HEK293 (cell line): ENCODE measurements at regions of chr9 and their contacts with region 1.

Region 1: DNA sequence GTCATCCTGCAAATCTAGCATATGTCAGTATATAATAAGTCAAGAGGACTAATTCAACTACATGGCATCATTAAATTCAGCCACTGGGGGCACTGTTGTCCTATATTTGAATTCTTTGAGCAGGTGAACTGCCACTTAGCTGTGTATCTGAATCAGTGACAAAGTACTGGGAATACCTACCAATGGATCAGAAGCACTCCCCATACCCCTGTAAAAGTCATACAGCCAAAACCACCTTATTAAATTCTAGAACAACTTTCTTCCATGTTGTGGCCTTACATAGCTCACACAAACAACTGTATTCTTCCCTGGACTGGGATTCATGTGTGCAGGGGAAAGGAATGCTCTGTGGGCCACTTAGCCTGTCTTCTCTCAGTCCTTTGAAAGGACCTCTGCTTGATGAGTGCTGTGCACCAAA is 57.4 kb upstream of the PLPP6 start:
- H3K4me3 ChIP-seq: no peak overlapping the region
- H3K27ac ChIP-seq: no peak overlapping the region
- H3K4me1 ChIP-seq: no peaks in the 10 kb centered on the region
- CTCF ChIP-seq: no peak

Region 2: DNA sequence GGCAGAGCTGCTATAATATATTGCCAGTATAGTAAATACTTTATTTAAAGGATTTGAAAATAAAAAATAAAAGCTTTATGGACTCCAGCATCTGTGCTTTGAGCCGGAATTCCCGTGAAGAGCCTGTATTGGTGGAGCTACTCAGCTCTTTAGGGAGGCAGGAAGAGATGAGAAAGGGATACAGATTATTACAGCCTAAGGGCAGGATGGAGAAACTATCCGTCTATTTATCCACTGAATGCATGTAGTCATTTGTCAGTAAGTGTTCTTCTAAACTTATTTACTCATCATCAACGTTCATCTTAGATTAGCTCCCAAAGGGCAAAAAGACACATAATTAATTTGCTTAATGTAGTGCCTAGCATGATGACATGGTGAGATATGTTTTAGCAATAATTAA is 66.1 kb before region 1 on chr9:
- CTCF ChIA-PET with region 1: no interaction called
- POLR2A ChIA-PET with region 1: no interaction called
- H3K4me3 ChIP-seq: no peak overlapping the region
- H3K27ac ChIP-seq: no peak overlapping the region
- H3K4me1 ChIP-seq: peaks cover 7% of the 10 kb centered on the region
- CTCF ChIP-seq: no peak

Region 3: DNA sequence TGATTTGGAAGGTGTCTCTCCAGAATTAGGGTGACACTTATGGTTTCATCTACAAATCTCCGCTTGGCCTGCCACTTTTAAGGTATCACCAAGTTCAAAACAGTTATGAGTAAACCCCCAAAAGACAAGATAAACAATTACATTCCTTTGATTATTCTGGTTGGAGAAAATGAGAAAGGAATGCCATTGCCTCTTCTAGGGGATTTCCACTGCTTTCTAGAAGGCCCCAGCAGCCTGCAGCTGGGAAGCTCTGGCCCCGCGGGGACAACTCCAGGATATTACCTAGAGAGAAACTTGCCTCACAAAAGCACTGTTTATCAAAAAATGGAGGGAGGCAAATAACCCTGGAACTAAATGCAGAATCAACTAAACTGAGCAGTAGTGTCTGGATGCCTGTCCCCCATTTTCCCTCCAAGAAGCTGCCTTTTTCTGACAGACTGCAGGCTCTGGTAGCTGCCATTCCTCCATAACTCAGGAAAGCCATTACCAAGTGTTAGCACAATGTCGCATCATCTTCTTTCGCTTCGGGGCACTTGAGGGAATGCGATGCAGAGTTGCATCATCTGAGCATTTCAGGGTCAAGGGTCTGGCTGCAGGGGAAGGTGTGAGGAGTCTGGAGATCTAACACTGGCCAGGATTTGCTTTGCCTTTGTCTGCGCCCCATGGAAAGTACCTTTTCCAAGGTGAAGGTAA is 14.1 kb before region 1 on chr9:
- CTCF ChIA-PET with region 1: interaction called, 20 read pairs
- POLR2A ChIA-PET with region 1: no interaction called
- H3K4me3 ChIP-seq: no peak overlapping the region
- H3K27ac ChIP-seq: no peak overlapping the region
- H3K4me1 ChIP-seq: peaks cover 2% of the 10 kb centered on the region; the same call in 1 of the 2 replicates
- CTCF ChIP-seq: no peak

Region 4: GRCh38 chr9:4615251-4615650 is 10.6 kb after region 1 on chr9:
- CTCF ChIA-PET with region 1: interaction called, 14 read pairs
- POLR2A ChIA-PET with region 1: no interaction called
- H3K4me3 ChIP-seq: no peak overlapping the region
- H3K27ac ChIP-seq: no peak overlapping the region
- H3K4me1 ChIP-seq: peaks cover 3% of the 10 kb centered on the region; the same call in 1 of the 2 replicates
- CTCF ChIP-seq: no peak